Mammary epithelial cell (primary cell): ENCODE measurements at regions of chr10 and their contacts with region 1.

Region 1: DNA sequence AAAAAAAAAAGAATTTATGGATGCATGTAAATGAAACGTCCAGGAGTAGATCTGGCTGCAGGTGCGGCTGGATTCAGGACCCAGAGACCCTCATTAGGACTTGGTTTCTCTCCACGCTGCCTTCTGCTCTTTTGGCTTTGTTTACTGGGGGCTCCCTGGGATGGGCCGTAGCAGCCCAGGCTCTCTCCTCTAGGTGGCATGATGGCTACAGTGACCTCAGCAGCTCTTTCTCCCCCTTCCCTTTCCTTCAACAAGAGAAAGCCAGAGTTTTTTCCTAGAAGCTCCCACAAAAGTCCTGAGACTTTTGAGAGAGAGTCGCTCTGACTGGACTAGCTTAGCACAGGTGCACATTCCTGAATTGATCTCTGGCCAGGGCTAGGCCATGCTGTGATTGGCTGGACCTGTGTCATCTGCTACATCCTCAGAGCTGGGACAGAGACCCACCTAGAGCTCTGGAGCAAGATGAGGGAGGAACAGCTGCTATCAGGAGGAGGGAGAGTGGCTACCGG is 67.8 kb upstream of the PDCD4 start:
- DNase-seq: peak; percentile 40
- H3K4me3 ChIP-seq: no peak overlapping the region
- H3K27ac ChIP-seq: no peak overlapping the region
- H3K4me1 ChIP-seq: peaks cover 14% of the 10 kb centered on the region
- H3K27me3 ChIP-seq: no peaks in the 10 kb centered on the region
- CTCF ChIP-seq: peak; percentile 40 to 69

Region 2: DNA sequence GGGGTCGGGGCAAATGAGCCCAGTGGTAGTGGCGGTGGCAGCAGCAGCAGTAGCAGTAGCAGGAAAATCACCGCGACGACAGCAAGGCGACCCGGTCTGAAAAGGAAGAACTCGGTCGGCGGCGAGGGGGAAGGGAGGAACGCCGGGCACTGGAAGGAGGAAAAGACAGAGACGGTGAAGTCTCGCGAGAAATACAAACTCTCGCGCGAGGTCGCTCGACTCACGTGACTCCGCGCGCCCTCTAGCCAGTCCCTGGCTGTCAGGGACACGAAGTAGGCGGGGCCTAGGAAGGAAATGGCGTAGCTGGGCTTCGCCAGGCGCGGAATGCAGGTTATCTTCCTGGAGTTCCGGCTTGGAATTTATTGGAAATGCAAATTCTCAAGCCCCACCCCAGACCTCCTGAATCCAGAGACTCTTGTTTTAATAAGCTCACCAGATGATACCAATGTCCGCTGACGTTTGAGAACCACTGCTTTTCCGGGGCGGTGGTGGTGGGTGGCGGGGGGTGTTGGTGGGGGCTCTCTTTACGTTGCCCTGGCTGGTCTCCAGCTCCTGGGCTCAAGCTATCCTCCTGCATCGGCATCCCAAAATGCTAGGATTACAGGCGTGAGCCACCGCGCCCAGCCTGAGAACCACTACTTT is 499.0 kb before region 1 on chr10 and contains the start of gene SMNDC1:
- CTCF ChIA-PET with region 1: interaction called, 12 read pairs
- dilution Hi-C with region 1: no loop called
- in situ Hi-C with region 1: no loop called
- intact Hi-C with region 1: no loop called
- DNase-seq: peak; percentile 96
- H3K4me3 ChIP-seq: peak within 1 kb of the TSS; percentile 69 to 97 (median 95)
- H3K27ac ChIP-seq: peak within 1 kb of the TSS; percentile 86
- H3K4me1 ChIP-seq: peaks cover 19% of the 10 kb centered on the region
- H3K27me3 ChIP-seq: no peaks in the 10 kb centered on the region
- CTCF ChIP-seq: no peak
- total RNA-seq, gene SMNDC1: 6.5 to 42.8 TPM

Region 3: GRCh38 chr10:110497438-110498086 is 306.3 kb before region 1 on chr10 and contains the start of gene DUSP5:
- CTCF ChIA-PET with region 1: no interaction called
- dilution Hi-C with region 1: no loop called
- in situ Hi-C with region 1: no loop called
- intact Hi-C with region 1: no loop called
- DNase-seq: peak; percentile 96
- H3K4me3 ChIP-seq: peak within 1 kb of the TSS; percentile 80 to 90 (median 82)
- H3K27ac ChIP-seq: peak within 1 kb of the TSS; percentile 92
- H3K4me1 ChIP-seq: peaks cover 49% of the 10 kb centered on the region
- H3K27me3 ChIP-seq: no peaks in the 10 kb centered on the region
- CTCF ChIP-seq: no peak
- total RNA-seq, gene DUSP5: 18.0 to 107 TPM

Region 4: DNA sequence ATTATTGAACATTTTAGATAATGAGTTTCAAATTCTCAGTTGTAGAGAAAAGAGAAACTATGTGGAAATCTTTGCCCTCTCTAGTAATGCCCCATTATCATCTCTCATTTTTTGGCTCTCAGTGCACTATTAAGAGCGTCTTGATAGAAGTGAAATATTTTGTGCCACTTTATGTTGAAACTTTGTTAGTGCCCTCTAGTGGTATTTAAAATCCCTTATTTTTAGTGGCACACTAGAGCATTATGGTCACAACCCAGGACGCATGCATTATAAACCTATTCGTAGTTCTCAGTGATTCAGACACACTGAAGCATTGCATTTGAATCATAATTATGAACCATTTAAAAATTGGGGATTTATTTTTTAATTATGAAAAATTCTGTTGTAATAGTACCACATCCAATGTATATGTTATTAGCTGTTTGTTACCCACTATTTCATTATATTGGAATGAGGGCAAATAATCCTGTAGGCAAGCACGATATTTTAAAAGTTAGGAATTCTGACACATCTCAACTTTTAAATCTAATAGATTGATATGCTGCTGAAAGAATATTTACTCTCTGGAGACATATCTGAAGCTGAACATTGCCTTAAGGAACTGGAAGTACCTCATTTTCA is 89.8 kb after region 1 on chr10:
- CTCF ChIA-PET with region 1: interaction called, 3 read pairs
- dilution Hi-C with region 1: no loop called
- in situ Hi-C with region 1: no loop called
- intact Hi-C with region 1: loop called (anchors 1 kb)
- DNase-seq: peak; percentile 28
- H3K4me3 ChIP-seq: no peak overlapping the region
- H3K27ac ChIP-seq: no peak overlapping the region
- H3K4me1 ChIP-seq: peaks cover 3% of the 10 kb centered on the region
- H3K27me3 ChIP-seq: no peaks in the 10 kb centered on the region
- CTCF ChIP-seq: peak; percentile 43 to 52

Region 5: DNA sequence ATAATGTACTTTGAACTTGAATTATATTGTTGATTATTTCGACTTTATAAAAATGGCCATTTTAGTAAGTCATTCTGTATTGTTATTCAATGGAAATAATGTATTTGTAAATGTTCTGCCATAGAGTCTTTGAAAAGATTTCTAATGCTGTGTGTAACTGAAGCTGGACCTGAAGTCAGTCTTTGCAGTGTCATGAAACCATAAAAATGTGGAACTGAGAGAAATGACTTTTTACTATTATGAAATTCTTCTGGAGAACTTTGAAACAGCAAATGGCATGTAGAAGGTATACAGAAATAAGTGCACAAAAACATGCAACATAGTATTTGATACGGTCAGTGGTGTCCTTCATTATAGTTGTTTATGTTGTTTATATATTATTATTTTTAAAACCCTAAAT is 213.2 kb after region 1 on chr10:
- CTCF ChIA-PET with region 1: no interaction called
- dilution Hi-C with region 1: no loop called
- in situ Hi-C with region 1: no loop called
- intact Hi-C with region 1: no loop called
- DNase-seq: no peak
- H3K4me3 ChIP-seq: no peak overlapping the region
- H3K27ac ChIP-seq: no peak overlapping the region
- H3K4me1 ChIP-seq: no peaks in the 10 kb centered on the region
- H3K27me3 ChIP-seq: no peaks in the 10 kb centered on the region
- CTCF ChIP-seq: no peak